ENCODE measurements at regions of chr4 and their contacts with region 1.

Region 1: GRCh38 chr4:88706574-88706973 is 8.9 kb upstream of the NAP1L5 start:
- DNase-seq: no peak
- ATAC-seq: peak; percentile 92

Region 2: GRCh38 chr4:89024051-89024675 is 317.6 kb after region 1 on chr4:
- intact Hi-C with region 1: loop called (anchors 10 kb)
- DNase-seq: no peak
- ATAC-seq: peak; percentile 96

Measured in sciatic nerve (tissue), 2 donors.